Left ventricle myocardium inferior (tissue), 1 donor: ENCODE measurements at regions of chr6 and their contacts with region 1.

Region 1: GRCh38 chr6:22318404-22318803 is 21.6 kb upstream of the PRL start:
- DNase-seq: no peak
- H3K4me3 ChIP-seq: no peak overlapping the region
- H3K27ac ChIP-seq: no peak overlapping the region
- H3K4me1 ChIP-seq: no peaks in the 10 kb centered on the region
- H3K27me3 ChIP-seq: no peaks in the 10 kb centered on the region
- CTCF ChIP-seq: no peak

Region 2: GRCh38 chr6:22003287-22003686 is 315.1 kb before region 1 on chr6:
- intact Hi-C with region 1: no loop called
- DNase-seq: no peak
- H3K4me3 ChIP-seq: no peak overlapping the region
- H3K27ac ChIP-seq: no peak overlapping the region
- H3K4me1 ChIP-seq: peaks cover 25% of the 10 kb centered on the region
- H3K27me3 ChIP-seq: no peaks in the 10 kb centered on the region
- CTCF ChIP-seq: no peak

Region 3: GRCh38 chr6:22399701-22400100 is 81.3 kb after region 1 on chr6:
- intact Hi-C with region 1: no loop called
- DNase-seq: no peak
- H3K4me3 ChIP-seq: no peak overlapping the region
- H3K27ac ChIP-seq: no peak overlapping the region
- H3K4me1 ChIP-seq: no peaks in the 10 kb centered on the region
- H3K27me3 ChIP-seq: no peaks in the 10 kb centered on the region
- CTCF ChIP-seq: no peak

Region 4: GRCh38 chr6:22413681-22414311 is 95.4 kb after region 1 on chr6:
- intact Hi-C with region 1: loop called (anchors 5 kb)
- DNase-seq: no peak
- H3K4me3 ChIP-seq: no peak overlapping the region
- H3K27ac ChIP-seq: no peak overlapping the region
- H3K4me1 ChIP-seq: no peaks in the 10 kb centered on the region
- H3K27me3 ChIP-seq: no peaks in the 10 kb centered on the region
- CTCF ChIP-seq: no peak